Kidney (tissue), 22 donors: ENCODE measurements at regions of chr15 and their contacts with region 1.

Region 1: DNA sequence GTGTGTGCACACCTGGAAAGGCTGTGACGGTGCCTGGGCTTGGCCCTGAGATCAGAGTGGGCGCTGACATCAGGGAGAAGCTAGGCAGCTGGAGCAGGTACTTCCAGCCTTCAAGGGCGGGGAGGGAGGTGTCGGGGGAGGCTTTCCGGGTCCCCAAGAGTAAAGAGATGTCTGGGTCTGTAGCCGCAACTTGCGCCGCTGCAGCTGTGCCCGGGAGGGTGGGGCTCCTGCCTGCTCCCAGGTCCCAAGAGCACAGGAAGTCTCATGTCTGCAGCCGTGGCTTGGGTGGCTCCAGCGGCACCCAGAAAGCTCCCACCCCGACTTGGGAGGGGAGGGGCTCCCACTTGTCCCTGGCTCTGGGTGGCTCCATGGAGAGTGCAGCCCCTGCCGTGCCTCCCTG is 103.2 kb upstream of the BNIP2 start:
- DNase-seq: no peak
- H3K4me3 ChIP-seq: no peak overlapping the region
- H3K27ac ChIP-seq: no peak overlapping the region
- H3K4me1 ChIP-seq: no peaks in the 10 kb centered on the region
- H3K27me3 ChIP-seq: no peaks in the 10 kb centered on the region
- CTCF ChIP-seq: no peak

Region 2: DNA sequence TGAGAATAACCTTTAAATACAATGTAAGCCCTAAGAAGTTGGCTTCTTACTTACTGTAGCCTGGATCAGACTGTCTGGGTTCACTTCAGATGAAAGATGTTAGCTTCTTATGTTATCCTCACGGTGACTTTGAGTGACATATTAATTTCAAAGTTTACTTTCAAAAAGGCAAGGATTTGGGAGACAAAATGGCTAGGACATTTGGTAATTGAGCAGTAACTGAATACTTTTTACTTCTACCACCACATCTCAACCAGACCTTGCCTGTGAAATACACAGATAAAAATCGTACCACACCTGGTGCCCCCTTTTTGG is 67.2 kb before region 1 on chr15:
- intact Hi-C with region 1: loop called (anchors 10 kb)
- DNase-seq: no peak
- H3K4me3 ChIP-seq: no peak overlapping the region
- H3K27ac ChIP-seq: no peak overlapping the region
- H3K4me1 ChIP-seq: no peaks in the 10 kb centered on the region
- H3K27me3 ChIP-seq: no peaks in the 10 kb centered on the region
- CTCF ChIP-seq: no peak